Caco-2 (cell line): ENCODE measurements at regions of chr10 and their contacts with region 1.

Region 1: DNA sequence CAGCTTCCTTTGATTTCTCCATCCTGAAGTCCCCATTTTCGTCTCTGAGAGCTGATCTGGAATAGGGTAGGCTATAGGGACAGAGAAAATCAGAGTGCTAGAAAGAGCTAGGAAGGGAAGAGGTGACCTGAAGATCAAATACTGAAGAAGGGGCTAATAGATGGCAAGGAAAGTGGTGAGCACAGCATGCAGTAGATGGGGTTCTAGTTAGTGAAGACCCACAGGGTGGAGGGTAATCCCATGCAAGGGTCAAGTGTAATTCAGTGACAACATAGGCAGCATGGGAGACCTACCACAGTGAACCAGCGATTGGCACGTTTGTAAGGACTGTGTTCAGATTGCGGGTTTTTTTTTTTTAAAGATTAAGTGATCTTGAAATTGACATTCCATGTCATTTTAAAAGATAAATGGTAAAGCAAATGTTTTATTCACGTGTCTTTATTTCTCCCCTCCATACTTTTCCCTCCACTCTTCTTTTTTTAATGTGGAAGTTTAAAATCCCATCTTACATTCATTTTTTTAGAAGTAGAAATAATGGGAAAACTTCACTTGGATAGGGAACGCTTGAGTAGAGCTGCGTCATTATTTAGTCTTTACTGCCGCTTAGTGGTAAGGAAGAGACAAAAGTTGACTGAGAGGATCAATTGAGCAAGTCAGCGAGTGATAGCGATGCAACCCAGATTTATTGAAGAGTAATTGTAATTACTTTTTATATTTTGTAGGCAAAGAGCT is 21.0 kb upstream of the ABI1 start:
- DNase-seq: peak in 1 of 2 experiments; percentile 59
- H3K4me3 ChIP-seq: no peak overlapping the region
- H3K4me3 Mint-ChIP-seq: no peak overlapping the region
- H3K27ac Mint-ChIP-seq: no peak overlapping the region
- H3K4me1 ChIP-seq: no peaks in the 10 kb centered on the region
- H3K4me1 Mint-ChIP-seq: peaks cover 11% of the 10 kb centered on the region
- H3K27me3 ChIP-seq: no peaks in the 10 kb centered on the region; the same call in 1 of the 2 replicates
- H3K27me3 Mint-ChIP-seq: peaks cover 7% of the 10 kb centered on the region
- CTCF ChIP-seq: peak; percentile 82 to 90

Region 2: GRCh38 chr10:26556748-26557640 is 324.8 kb before region 1 on chr10:
- CTCF ChIA-PET with region 1: interaction called, 4 read pairs
- POLR2A ChIA-PET with region 1: no interaction called
- intact Hi-C with region 1: loop called (anchors 5 kb)
- DNase-seq: peak in 1 of 2 experiments; percentile 73
- H3K4me3 ChIP-seq: no peak overlapping the region
- H3K4me3 Mint-ChIP-seq: no peak overlapping the region
- H3K27ac Mint-ChIP-seq: no peak overlapping the region
- H3K4me1 ChIP-seq: peaks cover 17% of the 10 kb centered on the region
- H3K4me1 Mint-ChIP-seq: peaks cover 13% of the 10 kb centered on the region
- H3K27me3 ChIP-seq: no peaks in the 10 kb centered on the region
- H3K27me3 Mint-ChIP-seq: no peaks in the 10 kb centered on the region
- CTCF ChIP-seq: peak; percentile 96 to 99

Region 3: DNA sequence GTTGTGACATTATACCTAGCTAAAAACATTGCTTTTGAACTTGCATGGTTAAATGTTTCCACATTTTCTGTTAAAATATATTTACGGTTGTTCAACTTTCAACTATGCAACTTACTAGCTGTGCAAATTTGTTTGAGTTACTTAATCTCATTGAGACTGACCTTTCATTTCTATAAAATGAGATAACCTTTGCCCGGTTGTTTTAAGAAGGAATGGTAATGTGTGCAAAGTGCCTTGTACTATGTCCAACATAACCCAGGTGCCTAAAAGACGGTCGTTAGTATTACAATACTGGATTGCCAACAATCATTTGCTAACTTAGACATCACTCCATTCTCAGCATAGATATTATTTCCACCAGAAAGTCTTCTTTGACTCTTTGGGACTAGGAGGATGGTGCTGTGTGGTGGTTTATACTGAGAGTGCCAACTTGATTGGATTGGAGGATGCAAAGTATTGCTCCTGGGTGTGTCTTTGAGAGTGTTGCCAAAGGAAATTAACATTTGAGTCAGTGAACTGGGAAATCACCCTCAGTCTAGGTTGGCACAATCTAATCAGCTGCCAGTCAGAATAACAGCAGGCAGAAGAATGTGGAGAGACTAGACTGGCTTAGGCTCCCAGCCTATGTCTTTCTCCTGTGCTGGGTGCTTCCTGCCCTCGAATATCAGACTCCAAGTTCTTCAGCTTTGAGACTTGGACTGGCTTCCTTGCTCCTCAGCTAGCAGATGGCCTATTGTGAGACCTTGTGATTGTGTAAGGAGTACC is 269.4 kb before region 1 on chr10:
- CTCF ChIA-PET with region 1: no interaction called
- POLR2A ChIA-PET with region 1: no interaction called
- intact Hi-C with region 1: loop called (anchors 5 kb)
- DNase-seq: no peak
- H3K4me3 ChIP-seq: no peak overlapping the region
- H3K4me3 Mint-ChIP-seq: no peak overlapping the region
- H3K27ac Mint-ChIP-seq: no peak overlapping the region
- H3K4me1 ChIP-seq: no peaks in the 10 kb centered on the region; the same call in 1 of the 2 replicates
- H3K4me1 Mint-ChIP-seq: no peaks in the 10 kb centered on the region
- H3K27me3 ChIP-seq: no peaks in the 10 kb centered on the region
- H3K27me3 Mint-ChIP-seq: peaks cover 12% of the 10 kb centered on the region
- CTCF ChIP-seq: no peak

Region 4: GRCh38 chr10:26682931-26683330 is 198.8 kb before region 1 on chr10:
- CTCF ChIA-PET with region 1: no interaction called
- POLR2A ChIA-PET with region 1: no interaction called
- intact Hi-C with region 1: loop called (anchors 1 kb)
- DNase-seq: no peak
- H3K4me3 ChIP-seq: no peak overlapping the region
- H3K4me3 Mint-ChIP-seq: no peak overlapping the region
- H3K27ac Mint-ChIP-seq: no peak overlapping the region
- H3K4me1 ChIP-seq: no peaks in the 10 kb centered on the region
- H3K4me1 Mint-ChIP-seq: peaks cover 7% of the 10 kb centered on the region
- H3K27me3 ChIP-seq: no peaks in the 10 kb centered on the region
- H3K27me3 Mint-ChIP-seq: peaks cover 13% of the 10 kb centered on the region
- CTCF ChIP-seq: no peak

Region 5: GRCh38 chr10:26725837-26726727 is 155.7 kb before region 1 on chr10:
- CTCF ChIA-PET with region 1: interaction called, 57 read pairs
- POLR2A ChIA-PET with region 1: no interaction called
- intact Hi-C with region 1: loop called (anchors 1 kb)
- DNase-seq: peak in 1 of 2 experiments; percentile 69
- H3K4me3 ChIP-seq: no peak overlapping the region
- H3K4me3 Mint-ChIP-seq: no peak overlapping the region
- H3K27ac Mint-ChIP-seq: no peak overlapping the region
- H3K4me1 ChIP-seq: no peaks in the 10 kb centered on the region
- H3K4me1 Mint-ChIP-seq: no peaks in the 10 kb centered on the region
- H3K27me3 ChIP-seq: no peaks in the 10 kb centered on the region
- H3K27me3 Mint-ChIP-seq: no peaks in the 10 kb centered on the region
- CTCF ChIP-seq: peak; percentile 88 to 93

Region 6: GRCh38 chr10:26860443-26861204 is 21.1 kb before region 1 on chr10 and contains the start of gene ABI1:
- CTCF ChIA-PET with region 1: interaction called, 6 read pairs
- POLR2A ChIA-PET with region 1: interaction called, 3 read pairs
- intact Hi-C with region 1: loop called (anchors 1 kb)
- DNase-seq: peak; percentile 99 to 100
- H3K4me3 ChIP-seq: peak within 1 kb of the TSS; percentile 82
- H3K4me3 Mint-ChIP-seq: peak within 1 kb of the TSS; percentile 97
- H3K27ac Mint-ChIP-seq: peak within 1 kb of the TSS; percentile 99
- H3K4me1 ChIP-seq: peaks cover 13% of the 10 kb centered on the region
- H3K4me1 Mint-ChIP-seq: peaks cover 26% of the 10 kb centered on the region
- H3K27me3 ChIP-seq: no peaks in the 10 kb centered on the region
- H3K27me3 Mint-ChIP-seq: no peaks in the 10 kb centered on the region
- CTCF ChIP-seq: no peak
- total RNA-seq, gene ABI1: 89.6 and 95.8 TPM in 2 replicates